ENCODE measurements at regions of chr22 and their contacts with region 1.

Region 1: DNA sequence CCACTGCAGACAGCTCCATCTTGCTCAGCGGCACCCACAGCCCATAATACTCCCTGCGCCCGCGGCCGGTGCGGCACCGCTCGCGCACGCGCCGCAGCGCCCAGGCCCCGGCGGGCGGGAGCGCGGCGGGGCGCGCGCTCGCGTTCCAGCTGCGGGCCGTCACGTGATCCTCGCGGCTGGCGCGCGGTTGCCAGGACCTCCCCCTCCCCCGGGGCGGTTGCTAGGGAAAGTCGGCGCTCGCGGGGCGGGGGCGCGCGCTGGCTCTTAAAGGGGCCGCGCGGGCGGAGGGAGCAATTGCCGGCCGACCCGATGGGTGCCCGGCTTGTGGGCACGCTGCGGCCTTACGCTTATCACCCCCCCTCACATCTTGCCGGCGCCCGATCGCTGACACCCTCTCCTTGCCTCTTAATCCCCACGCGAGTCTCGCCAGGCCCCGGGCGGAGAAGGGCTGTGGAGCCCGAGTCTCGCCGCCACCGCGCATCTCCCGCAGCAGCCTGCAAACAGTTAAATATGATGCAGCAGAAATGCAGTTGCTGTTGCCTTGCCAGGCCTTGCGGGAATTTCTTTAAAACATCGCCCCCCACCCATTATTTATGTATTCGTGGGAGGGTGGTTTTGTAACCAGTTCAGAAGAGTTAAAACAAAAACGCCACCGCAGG is at the start of gene CBX6:
- DNase-seq: peak; percentile 95
- ATAC-seq: peak; percentile 78
- H3K4me3 Mint-ChIP-seq: peak within 1 kb of the TSS; percentile 91
- H3K27ac Mint-ChIP-seq: peak within 1 kb of the TSS; percentile 89
- H3K4me1 Mint-ChIP-seq: peaks cover 45% of the 10 kb centered on the region
- H3K27me3 Mint-ChIP-seq: peaks cover 22% of the 10 kb centered on the region
- total RNA-seq, gene CBX6: 61.4 to 61.8 TPM

Region 2: DNA sequence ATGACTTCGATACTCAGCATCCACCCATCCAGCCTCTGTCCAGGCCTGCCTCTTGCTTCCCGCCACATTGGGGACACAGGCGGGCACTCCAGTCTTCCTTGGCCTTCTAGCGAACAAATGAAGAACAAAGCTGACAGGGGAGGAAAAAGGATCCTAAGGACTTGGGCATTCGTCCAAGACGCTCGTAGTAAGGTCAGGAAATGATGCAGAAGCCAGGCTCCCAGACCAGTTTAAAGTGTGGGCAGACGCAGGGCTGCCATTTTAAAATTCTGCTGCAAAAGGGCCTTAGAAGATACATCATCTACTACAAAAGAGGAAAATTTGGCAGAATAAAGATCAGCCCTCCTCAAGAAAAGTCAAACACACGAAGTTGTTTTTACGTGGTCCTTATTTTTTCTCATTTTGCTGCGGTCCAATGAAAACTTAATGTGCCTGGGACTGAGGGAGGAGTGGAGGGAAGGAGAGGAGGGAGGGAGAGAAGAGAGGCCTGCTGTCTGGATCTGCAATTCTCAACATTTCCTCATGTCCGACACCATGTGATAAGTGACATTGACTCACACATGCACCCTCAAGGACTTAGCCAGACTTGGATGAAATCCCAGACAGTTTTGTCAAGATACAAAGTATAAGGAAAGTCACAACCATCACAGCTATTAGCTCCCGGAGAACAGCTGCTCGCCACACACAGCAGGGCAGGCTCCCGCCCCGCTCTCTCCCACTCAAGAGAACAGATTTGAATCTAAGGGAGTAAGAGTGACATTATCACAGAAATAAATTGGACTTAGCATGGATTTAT is 84.1 kb before region 1 on chr22:
- CTCF ChIA-PET with region 1: no interaction called
- POLR2A ChIA-PET with region 1: no interaction called
- DNase-seq: no peak
- ATAC-seq: no peak
- H3K4me3 Mint-ChIP-seq: no peak overlapping the region
- H3K27ac Mint-ChIP-seq: no peak overlapping the region
- H3K4me1 Mint-ChIP-seq: peaks cover 5% of the 10 kb centered on the region
- H3K27me3 Mint-ChIP-seq: no peaks in the 10 kb centered on the region

Region 3: GRCh38 chr22:38820020-38820419 is 52.3 kb before region 1 on chr22:
- CTCF ChIA-PET with region 1: no interaction called
- POLR2A ChIA-PET with region 1: no interaction called
- DNase-seq: no peak
- ATAC-seq: no peak
- H3K4me3 Mint-ChIP-seq: no peak overlapping the region
- H3K27ac Mint-ChIP-seq: no peak overlapping the region
- H3K4me1 Mint-ChIP-seq: no peaks in the 10 kb centered on the region
- H3K27me3 Mint-ChIP-seq: no peaks in the 10 kb centered on the region

Region 4: DNA sequence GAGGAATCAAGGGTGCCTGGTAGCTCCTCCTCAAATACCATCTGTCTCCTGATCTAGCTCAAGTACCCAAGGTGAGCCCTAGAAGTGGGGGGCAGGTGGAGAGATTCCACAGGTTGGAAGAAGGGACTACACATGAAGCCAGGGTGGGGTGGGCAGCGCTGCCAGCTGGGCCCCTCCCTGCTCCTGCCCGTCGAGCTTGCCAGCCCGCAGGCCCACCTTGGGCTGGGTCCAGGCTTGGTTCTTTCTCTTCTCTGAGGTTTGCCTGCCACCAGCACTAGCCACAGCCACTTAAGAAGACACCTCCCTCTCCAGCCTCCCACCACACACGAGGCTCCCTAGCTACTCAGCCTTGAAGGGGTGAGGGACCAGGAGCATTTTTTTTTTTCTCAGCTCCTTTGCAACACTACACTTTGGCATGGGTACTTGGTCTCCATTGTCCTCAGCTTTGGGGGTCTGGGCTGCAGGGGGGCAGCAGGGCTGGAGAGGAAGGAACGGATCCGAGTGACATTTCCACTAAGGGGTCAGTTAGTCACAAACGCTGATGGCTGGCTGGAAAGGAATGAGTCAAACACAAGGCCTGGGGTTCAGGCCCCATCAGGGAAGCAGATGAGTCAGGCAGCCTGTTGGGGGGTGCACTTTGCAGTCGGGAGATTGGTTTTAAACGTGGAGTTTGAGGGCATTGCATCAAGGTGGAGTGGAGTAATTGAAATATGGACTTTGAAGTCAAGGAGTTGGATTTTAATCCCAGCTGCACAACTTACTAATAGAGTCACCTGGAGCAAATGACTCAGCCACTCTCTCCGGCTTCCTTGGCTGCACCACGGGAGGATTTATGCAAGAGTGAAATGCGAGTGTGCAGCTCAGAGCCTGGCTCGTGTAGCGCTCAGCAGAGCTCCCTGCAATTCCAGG is 21.1 kb before region 1 on chr22:
- CTCF ChIA-PET with region 1: interaction called, 32 read pairs
- POLR2A ChIA-PET with region 1: no interaction called
- DNase-seq: no peak
- ATAC-seq: no peak
- H3K4me3 Mint-ChIP-seq: no peak overlapping the region
- H3K27ac Mint-ChIP-seq: no peak overlapping the region
- H3K4me1 Mint-ChIP-seq: no peaks in the 10 kb centered on the region
- H3K27me3 Mint-ChIP-seq: peaks cover 35% of the 10 kb centered on the region

Region 5: GRCh38 chr22:38973289-38974169 is 101.2 kb after region 1 on chr22:
- CTCF ChIA-PET with region 1: interaction called, 43 read pairs
- POLR2A ChIA-PET with region 1: no interaction called
- DNase-seq: peak; percentile 70
- ATAC-seq: peak; percentile 71
- H3K4me3 Mint-ChIP-seq: no peak overlapping the region
- H3K27ac Mint-ChIP-seq: no peak overlapping the region
- H3K4me1 Mint-ChIP-seq: peaks cover 7% of the 10 kb centered on the region
- H3K27me3 Mint-ChIP-seq: peaks cover 28% of the 10 kb centered on the region

Region 6: GRCh38 chr22:39013942-39014722 is 141.8 kb after region 1 on chr22 and contains the start of gene APOBEC3C:
- CTCF ChIA-PET with region 1: interaction called, 14 read pairs
- POLR2A ChIA-PET with region 1: no interaction called
- DNase-seq: peak; percentile 94
- ATAC-seq: peak; percentile 95
- H3K4me3 Mint-ChIP-seq: peak within 1 kb of the TSS; percentile 97
- H3K27ac Mint-ChIP-seq: peak within 1 kb of the TSS; percentile 97
- H3K4me1 Mint-ChIP-seq: peaks cover 42% of the 10 kb centered on the region
- H3K27me3 Mint-ChIP-seq: no peaks in the 10 kb centered on the region
- total RNA-seq, gene APOBEC3C: 138 to 147 TPM

Region 7: GRCh38 chr22:39152511-39153219 is 280.4 kb after region 1 on chr22 and contains the start of gene CBX7:
- CTCF ChIA-PET with region 1: interaction called, 15 read pairs
- POLR2A ChIA-PET with region 1: interaction called, 5 read pairs
- DNase-seq: peak; percentile 93
- ATAC-seq: peak; percentile 94
- H3K4me3 Mint-ChIP-seq: peak within 1 kb of the TSS; percentile 79
- H3K27ac Mint-ChIP-seq: peak within 1 kb of the TSS; percentile 77
- H3K4me1 Mint-ChIP-seq: peaks cover 34% of the 10 kb centered on the region
- H3K27me3 Mint-ChIP-seq: peaks cover 19% of the 10 kb centered on the region
- total RNA-seq, gene CBX7: 8.6 to 8.7 TPM

Region 8: DNA sequence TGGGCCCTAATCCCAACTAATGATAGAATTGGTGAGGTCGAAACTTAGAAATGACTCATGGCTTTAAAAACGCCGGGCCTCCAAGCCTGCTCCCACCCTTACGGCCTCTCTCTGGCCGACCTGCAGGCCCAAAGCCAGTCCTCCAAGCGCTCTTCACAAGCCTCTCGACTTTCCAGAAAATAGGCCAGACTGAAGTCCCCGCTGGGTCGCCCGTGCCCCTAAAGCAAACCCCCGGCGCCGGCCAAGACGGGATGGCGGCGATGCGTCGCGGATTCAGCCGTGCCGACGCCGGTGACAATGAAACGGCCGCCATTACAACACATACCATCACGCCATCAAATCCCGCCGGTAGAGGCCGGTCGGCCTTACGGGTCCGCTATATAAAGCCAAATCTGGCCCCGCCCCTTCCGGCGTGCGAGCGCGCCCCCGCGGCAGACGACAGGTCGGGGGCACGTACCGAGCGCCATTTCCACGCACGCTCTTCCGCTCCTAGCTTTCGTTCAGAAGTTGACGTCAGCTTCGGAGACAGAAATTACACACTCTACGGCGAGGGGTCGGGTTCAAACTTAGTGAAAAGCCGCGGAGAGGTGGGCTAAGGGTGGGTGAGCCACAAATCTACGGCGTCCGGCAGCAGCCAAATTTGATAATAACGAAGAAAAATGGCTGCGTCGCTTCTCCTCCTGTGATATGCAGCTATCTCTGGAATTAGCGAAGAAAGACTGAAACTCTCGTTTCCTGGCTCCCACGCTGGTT is 447.1 kb after region 1 on chr22 and contains the start of gene RPL3:
- CTCF ChIA-PET with region 1: interaction called, 24 read pairs
- POLR2A ChIA-PET with region 1: interaction called, 3 read pairs
- DNase-seq: peak; percentile 97
- ATAC-seq: peak; percentile 83
- H3K4me3 Mint-ChIP-seq: peak within 1 kb of the TSS; percentile 100
- H3K27ac Mint-ChIP-seq: peak within 1 kb of the TSS; percentile 99
- H3K4me1 Mint-ChIP-seq: peaks cover 46% of the 10 kb centered on the region
- H3K27me3 Mint-ChIP-seq: no peaks in the 10 kb centered on the region
- total RNA-seq, gene RPL3: 1,693 to 1,717 TPM